Naive thymus-derived CD4-positive, alpha-beta T cell (primary cell): ENCODE measurements at regions of chr1 and their contacts with region 1.

Region 1: DNA sequence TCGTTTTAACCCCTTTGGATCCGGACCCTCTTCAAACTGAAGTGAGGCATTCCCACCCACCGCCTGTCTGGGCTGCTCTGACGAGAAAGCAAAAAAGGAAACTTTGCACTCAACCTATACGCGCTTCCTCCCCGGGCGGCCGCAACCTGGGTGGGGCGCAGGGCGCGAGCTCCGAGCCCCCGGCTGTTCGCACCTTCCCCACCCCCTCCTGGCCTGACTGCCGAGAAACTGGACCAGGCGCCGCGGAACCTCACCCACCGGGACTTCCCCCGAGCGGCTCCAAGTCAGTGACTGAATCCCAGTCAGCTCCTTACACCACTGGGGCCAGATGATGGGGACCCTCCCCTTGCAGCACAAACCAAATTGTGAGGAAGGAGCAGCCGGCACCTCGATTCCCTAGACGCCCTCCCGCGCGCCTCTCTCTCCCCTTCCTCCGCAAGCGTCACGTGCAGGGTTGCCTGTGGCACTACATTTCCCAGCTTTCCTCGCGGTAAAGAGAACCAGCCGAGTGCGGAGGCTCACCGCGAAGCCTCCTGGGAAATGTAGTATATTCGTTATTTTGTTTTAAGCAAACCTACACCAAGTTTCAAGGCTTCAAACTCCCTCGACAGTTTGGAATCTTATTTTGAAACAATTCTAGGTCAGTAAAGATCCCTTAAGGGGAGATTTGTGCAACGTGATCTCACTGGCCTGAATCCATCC is at the start of gene RAB29:
- DNase-seq: peak; percentile 67 to 92 (median 86)
- ATAC-seq: peak; percentile 92
- H3K4me3 ChIP-seq: peak within 1 kb of the TSS; percentile 81
- H3K4me3 Mint-ChIP-seq: peak within 1 kb of the TSS; percentile 88 to 100 (median 96)
- H3K27ac ChIP-seq: peak within 1 kb of the TSS; percentile 98
- H3K27ac Mint-ChIP-seq: peak within 1 kb of the TSS; percentile 96 to 100 (median 98)
- H3K4me1 ChIP-seq: peaks cover 17 to 24% of the 10 kb centered on the region in 2 donors
- H3K4me1 Mint-ChIP-seq: peaks cover 33 to 67% (median 60%) of the 10 kb centered on the region in 7 donors
- H3K27me3 ChIP-seq: no peaks in the 10 kb centered on the region
- H3K27me3 Mint-ChIP-seq: peaks cover 0 to 2% (median 0%) of the 10 kb centered on the region in 5 donors
- total RNA-seq, gene RAB29: 23.9 to 55.5 (median 45.9) TPM

Region 2: GRCh38 chr1:205591522-205592351 is 183.4 kb before region 1 on chr1:
- CTCF ChIA-PET with region 1: interaction called, 6 read pairs
- POLR2A ChIA-PET with region 1: interaction called, 7 read pairs
- intact Hi-C with region 1: loop called (anchors 1 to 5 kb)
- DNase-seq: peak; percentile 86 to 94 (median 91)
- ATAC-seq: peak; percentile 95
- H3K4me3 ChIP-seq: peak overlapping the region; percentile 55
- H3K4me3 Mint-ChIP-seq: peak overlapping the region; percentile 77 to 97 (median 91)
- H3K27ac ChIP-seq: peak overlapping the region; percentile 85
- H3K27ac Mint-ChIP-seq: peak overlapping the region; percentile 88 to 97 (median 95)
- H3K4me1 ChIP-seq: peaks cover 8 to 32% of the 10 kb centered on the region in 2 donors
- H3K4me1 Mint-ChIP-seq: peaks cover 19 to 65% (median 61%) of the 10 kb centered on the region in 7 donors
- H3K27me3 ChIP-seq: no peaks in the 10 kb centered on the region
- H3K27me3 Mint-ChIP-seq: peaks cover 0 to 4% (median 0%) of the 10 kb centered on the region in 5 donors

Region 3: GRCh38 chr1:205610036-205610435 is 165.1 kb before region 1 on chr1:
- CTCF ChIA-PET with region 1: no interaction called
- POLR2A ChIA-PET with region 1: no interaction called
- intact Hi-C with region 1: no loop called
- DNase-seq: no peak
- ATAC-seq: no peak
- H3K4me3 ChIP-seq: no peak overlapping the region
- H3K4me3 Mint-ChIP-seq: peak overlapping the region in 1 of 10 donors; percentile 50
- H3K27ac ChIP-seq: no peak overlapping the region
- H3K27ac Mint-ChIP-seq: peak overlapping the region in 6 of 9 donors; percentile 12 to 87 (median 52)
- H3K4me1 ChIP-seq: peaks cover 12 to 22% of the 10 kb centered on the region in 2 donors
- H3K4me1 Mint-ChIP-seq: peaks cover 20 to 71% (median 57%) of the 10 kb centered on the region in 7 donors
- H3K27me3 ChIP-seq: no peaks in the 10 kb centered on the region
- H3K27me3 Mint-ChIP-seq: no peaks in the 10 kb centered on the region

Region 4: GRCh38 chr1:205711104-205712020 is 63.8 kb before region 1 on chr1:
- CTCF ChIA-PET with region 1: interaction called, 7 read pairs
- POLR2A ChIA-PET with region 1: interaction called, 3 read pairs
- intact Hi-C with region 1: loop called (anchors 1 to 5 kb)
- DNase-seq: peak in 8 of 9 donors; percentile 36 to 72 (median 64)
- ATAC-seq: peak; percentile 91
- H3K4me3 ChIP-seq: no peak overlapping the region
- H3K4me3 Mint-ChIP-seq: no peak overlapping the region
- H3K27ac ChIP-seq: no peak overlapping the region
- H3K27ac Mint-ChIP-seq: peak overlapping the region in 6 of 9 donors; percentile 7 to 87 (median 15)
- H3K4me1 ChIP-seq: no peaks in the 10 kb centered on the region
- H3K4me1 Mint-ChIP-seq: peaks cover 9 to 28% (median 20%) of the 10 kb centered on the region in 7 donors
- H3K27me3 ChIP-seq: no peaks in the 10 kb centered on the region
- H3K27me3 Mint-ChIP-seq: no peaks in the 10 kb centered on the region

Region 5: GRCh38 chr1:205743977-205744376 is 31.2 kb before region 1 on chr1:
- CTCF ChIA-PET with region 1: interaction called, 5 read pairs
- POLR2A ChIA-PET with region 1: interaction called, 85 read pairs
- intact Hi-C with region 1: no loop called
- DNase-seq: no peak
- ATAC-seq: no peak
- H3K4me3 ChIP-seq: no peak overlapping the region
- H3K4me3 Mint-ChIP-seq: peak overlapping the region in 2 of 10 donors; percentile 7 to 15
- H3K27ac ChIP-seq: no peak overlapping the region
- H3K27ac Mint-ChIP-seq: peak overlapping the region in 3 of 9 donors; percentile 6 to 64 (median 34)
- H3K4me1 ChIP-seq: peaks cover 3 to 10% of the 10 kb centered on the region in 2 donors
- H3K4me1 Mint-ChIP-seq: peaks cover 41 to 83% (median 69%) of the 10 kb centered on the region in 7 donors
- H3K27me3 ChIP-seq: no peaks in the 10 kb centered on the region
- H3K27me3 Mint-ChIP-seq: no peaks in the 10 kb centered on the region

Region 6: DNA sequence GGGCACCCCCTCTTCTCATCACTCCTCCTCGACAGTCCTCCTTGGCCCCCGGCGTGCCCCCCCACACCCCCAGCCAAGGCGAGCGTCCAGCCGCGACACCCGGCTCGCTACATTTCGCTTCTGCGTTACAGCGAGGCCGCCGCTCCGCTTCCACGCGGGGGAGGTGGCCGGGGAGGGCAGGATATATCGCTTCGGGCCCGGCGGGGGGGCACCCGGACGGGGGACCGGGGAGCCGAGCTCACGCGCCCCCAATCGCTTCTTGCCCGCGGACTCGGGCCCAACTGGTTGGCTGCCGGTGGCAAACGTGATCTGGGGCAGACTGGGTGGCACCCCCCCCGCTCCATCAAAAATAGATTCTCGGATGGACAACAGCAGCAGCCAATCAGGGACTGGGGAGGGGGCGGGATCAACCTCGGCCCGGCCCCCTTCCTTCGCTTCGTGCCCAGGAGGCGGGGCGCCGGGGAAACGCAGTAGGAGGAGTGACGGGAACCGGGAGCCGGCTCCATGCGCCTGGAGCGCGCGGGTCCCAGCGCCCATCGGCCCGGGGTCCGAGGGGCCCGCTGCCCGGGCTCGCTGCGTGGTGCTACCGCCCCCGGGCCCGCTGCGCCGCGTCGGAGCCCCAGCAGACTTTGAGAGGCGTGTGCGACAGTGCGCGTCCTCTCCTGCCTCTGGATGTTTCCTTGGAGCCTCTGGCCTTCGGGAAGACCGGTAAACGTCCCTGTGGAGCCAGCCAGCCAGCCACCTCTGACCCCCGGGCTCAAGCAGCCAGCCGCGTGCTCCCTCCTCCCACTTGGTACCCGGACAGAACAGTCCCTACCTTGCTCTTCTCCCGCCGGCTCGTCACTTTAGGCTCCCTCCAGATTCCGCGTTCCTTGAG is 38.0 kb after region 1 on chr1 and contains the start of gene SLC41A1:
- CTCF ChIA-PET with region 1: interaction called, 3 read pairs
- POLR2A ChIA-PET with region 1: interaction called, 16 read pairs
- intact Hi-C with region 1: loop called (anchors 1 to 5 kb)
- DNase-seq: peak; percentile 71 to 96 (median 91)
- ATAC-seq: peak; percentile 98
- H3K4me3 ChIP-seq: peak within 1 kb of the TSS; percentile 69
- H3K4me3 Mint-ChIP-seq: peak within 1 kb of the TSS; percentile 88 to 94 (median 92)
- H3K27ac ChIP-seq: peak within 1 kb of the TSS; percentile 87
- H3K27ac Mint-ChIP-seq: peak within 1 kb of the TSS; percentile 79 to 97 (median 92)
- H3K4me1 ChIP-seq: peaks cover 23 to 36% of the 10 kb centered on the region in 2 donors
- H3K4me1 Mint-ChIP-seq: peaks cover 38 to 63% (median 60%) of the 10 kb centered on the region in 7 donors
- H3K27me3 ChIP-seq: no peaks in the 10 kb centered on the region
- H3K27me3 Mint-ChIP-seq: peaks cover 0 to 15% (median 0%) of the 10 kb centered on the region in 5 donors
- total RNA-seq, gene SLC41A1: 16.5 to 32.0 (median 27.8) TPM

Region 7: DNA sequence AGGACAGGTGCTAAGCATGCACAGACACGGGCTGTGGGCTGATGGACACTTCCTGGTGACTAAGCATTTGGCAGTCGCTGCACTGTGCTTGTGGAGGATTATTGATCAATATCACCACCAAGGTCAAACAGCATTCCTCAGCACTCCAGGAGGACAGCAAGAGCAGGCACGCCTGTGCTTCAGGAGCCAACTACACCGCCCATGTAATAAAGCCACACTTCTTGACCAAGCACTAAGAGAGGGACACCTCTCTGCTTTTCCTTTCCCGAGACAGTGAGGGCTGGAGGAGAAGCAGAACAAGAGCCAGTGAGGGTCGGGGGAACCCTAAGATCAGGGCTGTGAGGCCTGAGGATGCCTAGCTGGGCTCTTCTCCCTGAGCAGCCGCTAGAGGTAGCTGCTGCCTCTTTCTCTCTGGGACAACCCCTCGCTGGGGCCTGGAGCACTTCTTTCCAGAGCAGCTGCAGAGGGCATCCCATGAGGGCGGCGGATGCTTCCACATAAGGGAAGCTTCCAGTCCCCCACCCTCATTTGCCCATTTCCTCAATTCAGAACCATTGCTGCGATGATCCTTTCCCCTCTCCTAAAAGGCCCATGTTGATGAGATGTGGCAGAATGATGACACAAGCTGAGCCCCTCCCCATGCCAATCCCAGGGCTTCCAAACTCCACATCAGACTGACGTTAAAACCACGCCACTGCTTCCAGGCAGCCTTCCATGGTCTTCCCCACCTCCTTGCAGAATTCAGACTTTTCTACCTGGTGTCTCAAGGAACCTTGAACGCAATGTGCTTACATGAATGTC is 209.0 kb after region 1 on chr1:
- CTCF ChIA-PET with region 1: no interaction called
- POLR2A ChIA-PET with region 1: no interaction called
- intact Hi-C with region 1: no loop called
- DNase-seq: no peak
- ATAC-seq: peak; percentile 41
- H3K4me3 ChIP-seq: no peak overlapping the region
- H3K4me3 Mint-ChIP-seq: no peak overlapping the region
- H3K27ac ChIP-seq: no peak overlapping the region
- H3K27ac Mint-ChIP-seq: peak overlapping the region in 1 of 9 donors; percentile 10
- H3K4me1 ChIP-seq: no peaks in the 10 kb centered on the region
- H3K4me1 Mint-ChIP-seq: no peaks in the 10 kb centered on the region
- H3K27me3 ChIP-seq: no peaks in the 10 kb centered on the region
- H3K27me3 Mint-ChIP-seq: peaks cover 0 to 1% (median 0%) of the 10 kb centered on the region in 5 donors